Activated T-helper 1 cell treated with anti-CD3 and anti-CD28 coated beads, Interleukin-12 subunit alpha, Interleukin-12 subunit beta, Interleukin-2, Interleukin-4 antibody, amounts not matched to agents 30 ng/mL and 10 ng/mL and 1 ng/mL, durations not matched to agents 14 hours and 24 hours and 36 hours (primary cell): ENCODE measurements at regions of chr17 and their contacts with region 1.

Region 1: GRCh38 chr17:69574257-69575197 is 160.0 kb downstream of the MAP2K6 start:
- DNase-seq: no peak
- H3K4me3 Mint-ChIP-seq: no peak overlapping the region
- H3K27ac Mint-ChIP-seq: no peak overlapping the region
- H3K4me1 Mint-ChIP-seq: peaks cover 3% of the 10 kb centered on the region
- H3K27me3 Mint-ChIP-seq: no peaks in the 10 kb centered on the region

Region 2: GRCh38 chr17:70144260-70144846 is 569.8 kb after region 1 on chr17:
- intact Hi-C with region 1: loop called (anchors 1 kb)
- DNase-seq: no peak
- H3K4me3 Mint-ChIP-seq: no peak overlapping the region
- H3K27ac Mint-ChIP-seq: no peak overlapping the region
- H3K4me1 Mint-ChIP-seq: no peaks in the 10 kb centered on the region
- H3K27me3 Mint-ChIP-seq: peaks cover 20% of the 10 kb centered on the region

Region 3: GRCh38 chr17:70622368-70623260 is 1048.1 kb after region 1 on chr17:
- intact Hi-C with region 1: loop called (anchors 2 kb)
- DNase-seq: no peak
- H3K4me3 Mint-ChIP-seq: no peak overlapping the region
- H3K27ac Mint-ChIP-seq: no peak overlapping the region
- H3K4me1 Mint-ChIP-seq: no peaks in the 10 kb centered on the region
- H3K27me3 Mint-ChIP-seq: no peaks in the 10 kb centered on the region